CD8-positive, alpha-beta memory T cell (primary cell): ENCODE measurements at regions of chr10 and their contacts with region 1.

Region 1: GRCh38 chr10:1120801-1121211 is 64.6 kb downstream of the WDR37 start:
- DNase-seq: no peak
- H3K4me3 ChIP-seq: no peak overlapping the region
- H3K4me3 Mint-ChIP-seq: no peak overlapping the region
- H3K27ac ChIP-seq: no peak overlapping the region
- H3K27ac Mint-ChIP-seq: peak overlapping the region in 1 of 8 donors; percentile 66
- H3K4me1 ChIP-seq: peaks cover 15% of the 10 kb centered on the region
- H3K4me1 Mint-ChIP-seq: peaks cover 23 to 47% (median 38%) of the 10 kb centered on the region in 3 donors
- H3K27me3 ChIP-seq: no peaks in the 10 kb centered on the region
- H3K27me3 Mint-ChIP-seq: no peaks in the 10 kb centered on the region

Region 2: GRCh38 chr10:1089017-1089689 is 31.7 kb before region 1 on chr10:
- CTCF ChIA-PET with region 1: no interaction called
- POLR2A ChIA-PET with region 1: no interaction called
- DNase-seq: no peak
- H3K4me3 ChIP-seq: no peak overlapping the region
- H3K4me3 Mint-ChIP-seq: no peak overlapping the region
- H3K27ac ChIP-seq: no peak overlapping the region
- H3K27ac Mint-ChIP-seq: peak overlapping the region in 2 of 8 donors; percentile 27 to 29
- H3K4me1 ChIP-seq: no peaks in the 10 kb centered on the region
- H3K4me1 Mint-ChIP-seq: peaks cover 14 to 17% (median 16%) of the 10 kb centered on the region in 3 donors
- H3K27me3 ChIP-seq: no peaks in the 10 kb centered on the region
- H3K27me3 Mint-ChIP-seq: no peaks in the 10 kb centered on the region

Region 3: DNA sequence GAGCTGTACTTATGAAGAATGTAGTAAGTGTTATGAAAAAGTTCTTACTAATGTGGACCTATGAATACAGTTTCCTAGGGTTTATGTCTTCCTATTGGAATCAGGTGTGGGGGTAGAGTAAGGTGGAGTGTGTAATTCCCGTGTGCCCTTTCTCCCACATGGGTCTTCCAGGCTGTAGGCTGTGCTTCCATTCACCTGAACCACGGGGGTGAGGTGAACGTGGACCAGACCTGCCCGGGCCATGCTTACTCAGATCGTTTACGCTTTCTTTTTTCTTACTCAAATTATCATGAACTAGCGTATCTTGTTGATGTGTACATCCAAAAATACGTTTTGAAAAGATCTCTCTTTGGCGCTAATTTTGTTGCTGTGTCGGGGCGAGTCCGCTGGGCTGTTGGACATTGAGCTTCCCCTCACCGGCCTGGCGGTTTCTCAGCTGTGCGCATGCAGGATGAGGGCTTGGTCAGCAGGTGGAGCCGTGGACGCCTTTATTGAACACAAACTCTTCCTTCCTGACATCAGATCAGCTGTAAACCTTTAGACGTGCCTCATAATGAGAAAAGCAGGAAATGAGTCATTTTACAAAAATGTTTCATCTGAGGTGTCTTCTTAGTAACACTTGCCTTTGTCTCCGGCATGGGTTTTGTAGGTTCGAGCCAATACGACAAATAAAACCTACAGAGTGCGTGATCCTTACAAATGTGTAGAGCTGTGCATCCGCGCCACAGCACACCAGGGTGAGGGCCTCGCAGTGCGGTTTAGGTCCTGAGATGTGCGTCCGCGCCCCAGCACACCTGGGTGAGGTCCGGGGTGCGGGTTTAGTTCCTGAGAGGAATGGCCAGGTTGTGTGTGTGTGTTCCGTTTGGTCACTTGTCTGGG is 10.8 kb before region 1 on chr10:
- CTCF ChIA-PET with region 1: interaction called, 10 read pairs
- POLR2A ChIA-PET with region 1: no interaction called
- DNase-seq: peak; percentile 58 to 83 (median 74)
- H3K4me3 ChIP-seq: peak overlapping the region; percentile 49
- H3K4me3 Mint-ChIP-seq: peak overlapping the region; percentile 22 to 78 (median 69)
- H3K27ac ChIP-seq: peak overlapping the region; percentile 62
- H3K27ac Mint-ChIP-seq: peak overlapping the region; percentile 68 to 92 (median 90)
- H3K4me1 ChIP-seq: peaks cover 20% of the 10 kb centered on the region
- H3K4me1 Mint-ChIP-seq: peaks cover 37 to 48% (median 41%) of the 10 kb centered on the region in 3 donors
- H3K27me3 ChIP-seq: no peaks in the 10 kb centered on the region
- H3K27me3 Mint-ChIP-seq: peaks cover 0 to 1% of the 10 kb centered on the region in 2 donors

Region 4: GRCh38 chr10:1159131-1160061 is 38.6 kb after region 1 on chr10:
- CTCF ChIA-PET with region 1: no interaction called
- POLR2A ChIA-PET with region 1: no interaction called
- DNase-seq: no peak
- H3K4me3 ChIP-seq: no peak overlapping the region
- H3K4me3 Mint-ChIP-seq: peak overlapping the region in 1 of 7 donors; percentile 76
- H3K27ac ChIP-seq: peak overlapping the region; percentile 51
- H3K27ac Mint-ChIP-seq: no peak overlapping the region
- H3K4me1 ChIP-seq: no peaks in the 10 kb centered on the region
- H3K4me1 Mint-ChIP-seq: no peaks in the 10 kb centered on the region
- H3K27me3 ChIP-seq: no peaks in the 10 kb centered on the region
- H3K27me3 Mint-ChIP-seq: peaks cover 5 to 10% of the 10 kb centered on the region in 2 donors

Region 5: GRCh38 chr10:1323951-1324350 is 203.1 kb after region 1 on chr10:
- CTCF ChIA-PET with region 1: no interaction called
- POLR2A ChIA-PET with region 1: no interaction called
- DNase-seq: no peak
- H3K4me3 ChIP-seq: no peak overlapping the region
- H3K4me3 Mint-ChIP-seq: no peak overlapping the region
- H3K27ac ChIP-seq: no peak overlapping the region
- H3K27ac Mint-ChIP-seq: no peak overlapping the region
- H3K4me1 ChIP-seq: no peaks in the 10 kb centered on the region
- H3K4me1 Mint-ChIP-seq: no peaks in the 10 kb centered on the region
- H3K27me3 ChIP-seq: no peaks in the 10 kb centered on the region
- H3K27me3 Mint-ChIP-seq: peaks cover 2 to 19% of the 10 kb centered on the region in 2 donors